ENCODE measurements at regions of chr16 and their contacts with region 1.

Region 1: GRCh38 chr16:57167953-57168352 is 17.9 kb downstream of the PSME3IP1 start:
- DNase-seq: no peak
- H3K4me3 ChIP-seq: no peak overlapping the region
- H3K27ac ChIP-seq: no peak overlapping the region
- H3K4me1 ChIP-seq: no peaks in the 10 kb centered on the region
- H3K27me3 ChIP-seq: no peaks in the 10 kb centered on the region
- CTCF ChIP-seq: peak in 2 of 3 donors; percentile 25 to 26
- POLR2A ChIP-seq: no peak

Region 2: GRCh38 chr16:56211435-56211981 is 956.4 kb before region 1 on chr16:
- intact Hi-C with region 1: no loop called
- DNase-seq: no peak
- H3K4me3 ChIP-seq: no peak overlapping the region
- H3K27ac ChIP-seq: no peak overlapping the region
- H3K4me1 ChIP-seq: no peaks in the 10 kb centered on the region
- H3K27me3 ChIP-seq: peaks cover 0 to 4% of the 10 kb centered on the region in 2 donors
- CTCF ChIP-seq: no peak
- POLR2A ChIP-seq: no peak

Region 3: DNA sequence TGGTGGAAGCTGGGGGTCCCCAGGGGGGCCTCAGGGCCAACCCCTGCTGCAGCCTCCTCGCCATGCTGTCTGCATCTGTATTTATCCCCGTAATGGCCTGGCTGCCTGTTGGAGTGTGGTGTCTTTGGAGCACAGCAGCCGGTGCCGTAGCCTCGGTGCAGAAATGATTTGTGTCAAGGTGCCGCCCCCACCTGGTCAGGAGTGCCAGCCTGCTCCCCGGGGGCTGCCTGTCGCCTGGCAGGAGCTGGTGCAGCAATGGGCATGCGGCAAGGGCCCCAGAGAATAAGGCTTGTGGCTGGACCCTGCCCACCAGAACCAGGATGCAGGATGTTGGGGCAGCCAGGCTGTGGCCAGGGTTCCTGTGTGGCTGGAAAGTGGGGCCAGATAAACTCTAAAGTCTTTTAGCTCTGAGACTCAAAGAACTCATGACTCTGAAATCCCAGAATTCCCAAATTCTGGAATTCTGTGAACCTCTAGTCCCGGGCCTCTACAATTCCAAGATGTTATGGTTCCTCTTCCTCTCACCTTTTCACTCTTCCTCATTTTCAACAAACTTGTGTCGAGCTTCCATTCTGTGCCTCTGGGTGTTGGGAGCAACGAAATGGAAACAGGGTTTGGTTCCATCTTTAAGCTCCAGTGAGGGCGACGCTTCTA is 69.6 kb before region 1 on chr16:
- intact Hi-C with region 1: loop called (anchors 2 kb)
- DNase-seq: no peak
- H3K4me3 ChIP-seq: no peak overlapping the region
- H3K27ac ChIP-seq: no peak overlapping the region
- H3K4me1 ChIP-seq: peaks cover 0 to 4% of the 10 kb centered on the region in 2 donors
- H3K27me3 ChIP-seq: no peaks in the 10 kb centered on the region
- CTCF ChIP-seq: no peak
- POLR2A ChIP-seq: no peak